Activated CD8-positive, alpha-beta T cell treated with anti-CD3 and anti-CD28 coated beads for 36 hours (primary cell): ENCODE measurements at regions of chr7 and their contacts with region 1.

Region 1: GRCh38 chr7:47945261-47946001 is 2.8 kb downstream of the PKD1L1 start:
- DNase-seq: peak; percentile 92
- ATAC-seq: peak; percentile 61
- H3K4me3 Mint-ChIP-seq: no peak overlapping the region
- H3K27ac Mint-ChIP-seq: no peak overlapping the region
- H3K4me1 Mint-ChIP-seq: no peaks in the 10 kb centered on the region
- H3K27me3 Mint-ChIP-seq: no peaks in the 10 kb centered on the region
- CTCF ChIP-seq: peak; percentile 76

Region 2: DNA sequence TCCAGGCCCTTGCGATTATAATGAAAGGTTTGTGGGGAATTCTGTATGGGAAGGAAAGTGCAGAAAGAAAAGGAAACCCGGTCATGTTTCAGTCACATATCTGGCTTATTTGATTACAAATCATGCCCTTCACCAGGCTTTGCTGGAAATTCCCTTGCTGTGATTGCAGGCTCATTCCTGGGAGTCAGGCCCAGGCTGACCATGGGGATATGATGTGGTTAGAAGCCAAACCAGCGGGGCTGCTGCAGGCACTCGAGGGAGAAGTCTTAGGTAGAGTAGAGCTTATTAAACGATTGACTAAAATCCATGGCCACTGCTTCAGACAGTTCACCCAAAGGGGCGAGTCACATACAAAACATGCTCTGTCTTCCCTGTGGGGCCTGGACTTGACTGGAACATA is 13.4 kb before region 1 on chr7:
- CTCF ChIA-PET with region 1: interaction called, 14 read pairs
- POLR2A ChIA-PET with region 1: no interaction called
- intact Hi-C with region 1: no loop called
- DNase-seq: no peak
- ATAC-seq: no peak
- H3K4me3 Mint-ChIP-seq: no peak overlapping the region
- H3K27ac Mint-ChIP-seq: no peak overlapping the region
- H3K4me1 Mint-ChIP-seq: no peaks in the 10 kb centered on the region
- H3K27me3 Mint-ChIP-seq: no peaks in the 10 kb centered on the region
- CTCF ChIP-seq: no peak

Region 3: GRCh38 chr7:47968847-47969774 is 23.7 kb after region 1 on chr7:
- CTCF ChIA-PET with region 1: interaction called, 21 read pairs
- POLR2A ChIA-PET with region 1: no interaction called
- intact Hi-C with region 1: no loop called
- DNase-seq: peak; percentile 75
- ATAC-seq: peak; percentile 83
- H3K4me3 Mint-ChIP-seq: no peak overlapping the region
- H3K27ac Mint-ChIP-seq: peak overlapping the region; percentile 51
- H3K4me1 Mint-ChIP-seq: peaks cover 28% of the 10 kb centered on the region
- H3K27me3 Mint-ChIP-seq: no peaks in the 10 kb centered on the region
- CTCF ChIP-seq: peak; percentile 85

Region 4: DNA sequence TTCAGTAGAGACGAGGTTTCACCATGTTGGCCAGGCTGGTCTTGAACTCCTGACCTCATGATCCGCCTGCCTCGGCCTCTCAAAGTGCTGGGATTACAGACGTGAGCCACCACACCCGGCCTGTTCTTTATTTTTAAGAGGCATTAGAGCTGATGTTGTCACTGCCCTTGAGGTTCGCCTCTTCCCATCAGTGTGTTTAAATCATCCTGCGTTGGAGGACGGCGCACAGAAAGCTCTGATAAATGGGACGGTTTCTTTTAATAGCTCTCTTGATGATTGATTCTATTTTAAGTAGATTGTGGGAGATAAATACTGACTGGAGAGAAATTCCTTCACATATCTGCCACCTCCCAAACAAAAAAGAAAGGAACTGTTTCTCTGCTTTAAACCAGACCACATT is 172.6 kb after region 1 on chr7:
- CTCF ChIA-PET with region 1: interaction called, 12 read pairs
- POLR2A ChIA-PET with region 1: interaction called, 3 read pairs
- intact Hi-C with region 1: no loop called
- DNase-seq: no peak
- ATAC-seq: no peak
- H3K4me3 Mint-ChIP-seq: no peak overlapping the region
- H3K27ac Mint-ChIP-seq: no peak overlapping the region
- H3K4me1 Mint-ChIP-seq: no peaks in the 10 kb centered on the region
- H3K27me3 Mint-ChIP-seq: peaks cover 2% of the 10 kb centered on the region
- CTCF ChIP-seq: no peak

Region 5: DNA sequence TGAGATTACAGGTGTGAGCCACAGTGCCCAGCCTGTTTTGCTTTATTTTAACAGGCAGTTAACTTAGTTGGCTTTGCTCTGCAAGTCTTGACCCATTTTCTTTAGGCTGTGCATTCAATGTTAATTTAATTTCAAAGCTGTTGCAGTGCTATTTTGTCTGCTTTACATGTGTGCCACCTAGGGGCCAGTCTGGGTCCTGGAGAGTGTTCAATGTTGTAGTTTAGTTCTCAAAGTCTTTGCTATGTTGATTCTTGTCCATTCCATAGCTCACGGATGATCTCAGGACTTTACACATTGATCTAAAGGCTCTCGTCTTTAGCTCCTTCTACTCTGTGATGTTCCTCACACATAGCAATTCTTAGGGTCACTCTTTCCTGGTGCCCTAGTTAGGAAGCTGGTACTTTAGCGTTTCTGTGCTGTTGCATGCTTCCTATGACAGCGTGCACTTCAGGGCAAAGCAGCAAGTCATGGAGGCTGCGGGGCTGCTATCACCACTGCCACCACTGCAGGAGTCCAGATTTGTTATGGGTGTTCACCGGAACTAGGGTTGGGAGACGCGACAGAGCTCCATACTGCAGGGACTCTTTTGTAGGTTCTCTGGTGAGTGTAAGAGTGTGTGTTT is 209.5 kb after region 1 on chr7:
- CTCF ChIA-PET with region 1: interaction called, 33 read pairs
- POLR2A ChIA-PET with region 1: no interaction called
- intact Hi-C with region 1: no loop called
- DNase-seq: peak; percentile 57
- ATAC-seq: no peak
- H3K4me3 Mint-ChIP-seq: no peak overlapping the region
- H3K27ac Mint-ChIP-seq: no peak overlapping the region
- H3K4me1 Mint-ChIP-seq: no peaks in the 10 kb centered on the region
- H3K27me3 Mint-ChIP-seq: peaks cover 9% of the 10 kb centered on the region
- CTCF ChIP-seq: peak; percentile 56